HEK293T (cell line): ENCODE measurements at regions of chr5 and their contacts with region 1.

Region 1: DNA sequence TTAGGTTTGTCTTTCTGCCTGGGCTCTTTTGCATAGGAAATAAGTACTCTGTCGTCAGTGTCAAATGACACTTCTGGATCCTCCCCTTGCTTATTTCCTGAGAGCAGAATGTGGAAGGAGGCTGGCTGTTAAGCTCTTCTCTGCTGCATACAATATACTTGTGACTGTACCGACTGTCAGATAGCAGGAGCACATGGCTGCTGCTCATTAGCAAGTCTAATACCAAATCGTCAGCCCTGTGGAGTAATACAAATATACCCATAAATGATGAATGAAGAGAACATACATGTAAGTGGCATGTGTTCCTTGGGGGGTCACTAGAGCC is at the start of gene GPR151:
- DNase-seq: no peak

Region 2: GRCh38 chr5:146338774-146339714 is 177.1 kb before region 1 on chr5 and contains the start of gene POU4F3:
- CTCF ChIA-PET with region 1: no interaction called
- POLR2A ChIA-PET with region 1: no interaction called
- DNase-seq: no peak

Region 3: GRCh38 chr5:146475190-146475801 is 40.8 kb before region 1 on chr5:
- CTCF ChIA-PET with region 1: no interaction called
- POLR2A ChIA-PET with region 1: no interaction called
- DNase-seq: peak; percentile 12

Region 4: DNA sequence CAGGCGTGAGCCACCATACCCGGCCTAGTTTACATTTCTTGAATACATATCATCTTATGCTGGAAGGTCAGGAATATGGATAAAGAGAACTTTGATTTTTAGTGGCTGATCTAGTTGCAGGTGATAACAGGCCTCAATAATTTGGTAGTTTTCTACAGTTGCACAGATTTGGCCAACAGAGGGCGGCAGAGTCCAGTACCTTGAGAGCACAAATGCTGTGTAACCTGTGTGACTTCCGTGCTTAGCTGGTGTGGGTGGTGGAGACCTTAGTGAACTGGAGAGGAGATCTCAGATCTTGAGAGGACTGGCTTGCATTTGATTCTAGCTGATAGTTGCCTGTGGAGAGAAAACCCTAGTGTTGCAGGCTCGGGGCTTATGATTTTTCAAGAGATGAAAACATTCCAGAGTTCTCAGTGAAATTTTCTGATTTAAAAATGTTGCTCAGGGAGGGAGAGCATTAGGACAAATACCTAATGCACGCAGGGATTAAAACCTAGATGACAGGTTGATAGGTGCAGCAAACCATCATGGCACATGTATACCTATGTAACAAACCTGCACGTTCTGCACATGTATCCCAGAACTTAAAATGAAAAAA is 17.2 kb after region 1 on chr5:
- CTCF ChIA-PET with region 1: interaction called, 12 read pairs
- POLR2A ChIA-PET with region 1: interaction called, 3 read pairs
- DNase-seq: peak; percentile 72